Cardiac septum (tissue), 1 donor: ENCODE measurements at regions of chr1 and their contacts with region 1.

Region 1: DNA sequence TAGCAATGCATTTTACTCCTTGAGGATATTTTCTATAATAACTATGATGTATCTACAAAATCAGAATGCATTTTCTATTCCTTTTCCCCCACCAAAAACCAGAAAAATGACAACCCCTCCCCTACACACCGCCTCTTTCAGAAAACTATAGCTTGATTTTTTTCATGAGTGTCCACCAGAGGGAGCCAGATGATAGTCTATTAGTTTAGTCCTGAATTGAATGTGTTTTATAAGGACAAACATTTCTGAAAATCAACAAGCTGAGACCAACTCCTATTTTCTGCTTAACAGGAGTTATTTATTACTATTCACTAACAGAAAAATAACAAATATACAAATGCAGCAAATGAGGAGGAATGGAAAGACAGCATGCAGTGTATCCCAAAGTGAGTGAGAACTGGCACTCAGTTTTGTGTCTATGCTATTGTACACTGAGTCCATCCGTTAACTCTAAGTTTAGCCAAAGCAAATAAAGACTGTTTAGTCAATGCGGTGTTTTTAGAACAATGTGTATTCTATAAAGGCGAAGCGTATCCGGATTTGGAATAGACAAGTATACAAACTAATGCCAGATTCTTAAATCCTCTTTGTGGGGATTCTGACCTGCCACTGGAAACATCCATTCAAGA is 182.6 kb downstream of the VAV3 start:
- DNase-seq: no peak

Region 2: GRCh38 chr1:107688354-107688753 is 94.0 kb before region 1 on chr1:
- intact Hi-C with region 1: no loop called
- DNase-seq: no peak

Region 3: DNA sequence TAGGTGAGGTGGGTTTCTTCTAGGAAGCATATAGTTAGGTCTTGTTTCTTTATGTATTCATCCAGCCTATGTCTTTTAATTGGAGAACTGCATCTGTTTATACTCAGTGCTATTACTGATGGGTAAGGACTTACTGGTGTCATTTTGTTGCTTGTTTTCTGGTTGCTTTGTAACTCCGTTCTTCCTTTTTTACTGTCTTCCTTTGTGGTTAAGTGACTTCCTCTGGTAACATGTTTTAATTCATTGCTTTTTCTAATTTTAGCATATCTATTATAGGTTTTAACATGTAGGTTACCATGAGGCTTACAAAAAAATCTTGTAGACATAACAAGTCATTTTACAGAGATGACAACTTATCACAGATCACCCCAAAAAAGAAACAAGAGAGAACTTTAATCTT is 21.8 kb after region 1 on chr1:
- intact Hi-C with region 1: no loop called
- DNase-seq: no peak

Region 4: GRCh38 chr1:107963601-107964335 is 181.4 kb after region 1 on chr1:
- intact Hi-C with region 1: loop called (anchors 5 kb)
- DNase-seq: peak; percentile 82